ENCODE measurements at regions of chr12 and their contacts with region 1.

Region 1: DNA sequence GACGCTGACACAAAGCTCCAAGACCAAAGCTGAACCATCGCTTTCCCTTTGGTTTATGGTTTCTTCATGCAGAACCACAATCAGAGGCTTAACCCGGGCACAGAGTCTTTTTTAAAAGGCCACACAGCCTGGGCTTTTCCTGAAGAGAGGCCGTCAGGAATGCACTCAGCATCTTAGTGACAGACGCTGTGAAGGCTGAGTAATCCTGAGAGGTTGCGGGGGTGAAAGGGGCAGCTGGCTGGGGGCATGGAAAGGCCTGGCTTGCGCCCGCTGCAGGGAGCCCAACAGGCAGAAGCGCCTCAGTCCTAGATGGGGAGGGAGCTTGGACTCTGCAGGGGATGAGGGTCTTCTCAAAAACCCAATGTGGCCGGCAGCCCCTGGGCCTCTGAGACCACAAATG is 13.6 kb downstream of the CTDSP2 start:
- DNase-seq: no peak
- CTCF ChIP-seq: no peak

Region 2: GRCh38 chr12:57904848-57905811 is 72.2 kb after region 1 on chr12:
- in situ Hi-C with region 1: loop called (anchors 5 kb)
- DNase-seq: peak; percentile 76
- CTCF ChIP-seq: peak; percentile 99

Measured in GM13976 (cell line).